HepG2 (cell line): ENCODE measurements at regions of chr6 and their contacts with region 1.

Region 1: GRCh38 chr6:63764318-63764916 is 128.8 kb downstream of the PHF3 start:
- DNase-seq: peak; percentile 65
- ATAC-seq: no peak
- H3K4me3 ChIP-seq: no peak overlapping the region
- H3K27ac ChIP-seq: no peak overlapping the region
- H3K4me1 ChIP-seq: no peaks in the 10 kb centered on the region
- H3K27me3 ChIP-seq: no peaks in the 10 kb centered on the region
- CTCF ChIP-seq: peak; percentile 46; the same call in 1 of the 2 replicates
- EP300 ChIP-seq: no peak
- POLR2A ChIP-seq: no peak
- RAD21 ChIP-seq: no peak

Region 2: DNA sequence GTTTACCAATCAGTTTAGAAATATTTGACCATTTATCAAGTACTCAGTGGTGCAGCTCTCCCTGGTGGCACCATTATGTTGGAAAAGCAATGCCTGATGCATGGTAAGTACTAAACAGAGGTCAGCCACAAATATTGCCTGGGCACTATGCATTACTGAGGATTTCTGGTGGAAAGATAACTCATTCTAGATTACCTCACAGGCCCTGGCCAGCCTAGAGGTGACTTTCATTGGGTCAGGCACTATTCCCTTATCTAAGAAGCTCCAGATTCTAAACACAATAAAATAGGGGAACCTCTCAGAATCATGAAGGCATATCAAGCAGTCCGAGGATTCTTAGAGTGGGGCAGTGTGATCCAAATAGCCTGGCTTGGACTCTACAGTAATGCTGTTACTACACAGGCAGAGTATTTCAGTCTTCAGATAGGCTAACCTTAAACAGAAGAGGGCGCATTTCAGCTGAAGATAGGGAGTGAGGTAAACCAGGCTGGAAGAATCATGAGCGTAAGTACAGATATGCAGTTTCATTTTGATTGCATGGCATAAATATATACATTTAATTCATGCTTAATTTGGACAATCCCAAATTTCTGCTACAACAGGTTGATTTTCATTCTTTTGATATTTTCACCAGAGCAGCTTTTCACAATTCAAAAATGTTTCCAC is 456.7 kb before region 1 on chr6:
- CTCF ChIA-PET with region 1: interaction called, 10 read pairs
- POLR2A ChIA-PET with region 1: no interaction called
- in situ Hi-C with region 1: no loop called
- intact Hi-C with region 1: loop called (anchors 1 kb)
- DNase-seq: peak; percentile 72
- ATAC-seq: peak; percentile 100
- H3K4me3 ChIP-seq: peak overlapping the region in 1 of 3 experiments; percentile 2; a peak in 2 of 6 replicates
- H3K27ac ChIP-seq: no peak overlapping the region
- H3K4me1 ChIP-seq: peaks cover 18% of the 10 kb centered on the region
- H3K27me3 ChIP-seq: no peaks in the 10 kb centered on the region
- CTCF ChIP-seq: peak; percentile 84
- EP300 ChIP-seq: no peak
- POLR2A ChIP-seq: no peak
- RAD21 ChIP-seq: peak; percentile 73

Region 3: DNA sequence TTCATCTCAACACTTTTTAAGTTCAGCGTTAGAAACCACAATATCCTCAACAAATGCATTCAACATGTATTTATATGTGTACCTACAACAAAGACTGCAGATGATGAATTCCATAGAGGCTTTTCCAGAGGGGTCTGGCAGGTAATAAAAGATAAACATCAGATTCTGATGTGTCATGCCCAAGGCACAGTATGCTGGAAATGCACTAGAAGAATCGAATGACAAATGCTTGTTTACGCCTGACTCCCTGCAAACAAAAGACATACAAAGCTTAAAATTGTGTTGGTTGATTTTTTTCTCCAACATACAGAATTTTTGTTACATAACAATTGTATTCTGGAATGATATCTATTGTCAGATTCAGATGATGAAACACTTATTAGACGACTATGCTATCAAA is 444.5 kb before region 1 on chr6 and contains the start of gene LGSN:
- CTCF ChIA-PET with region 1: no interaction called
- POLR2A ChIA-PET with region 1: no interaction called
- in situ Hi-C with region 1: no loop called
- intact Hi-C with region 1: no loop called
- DNase-seq: no peak
- ATAC-seq: no peak
- H3K4me3 ChIP-seq: no peak within 1 kb of the TSS
- H3K27ac ChIP-seq: no peak within 1 kb of the TSS
- H3K4me1 ChIP-seq: no peaks in the 10 kb centered on the region
- H3K27me3 ChIP-seq: no peaks in the 10 kb centered on the region
- CTCF ChIP-seq: no peak
- EP300 ChIP-seq: no peak
- POLR2A ChIP-seq: no peak
- RAD21 ChIP-seq: no peak
- total RNA-seq, gene LGSN: 0.13 and 0.53 TPM in 2 replicates

Region 4: GRCh38 chr6:63584125-63584514 is 180.3 kb before region 1 on chr6:
- CTCF ChIA-PET with region 1: no interaction called
- POLR2A ChIA-PET with region 1: no interaction called
- in situ Hi-C with region 1: no loop called
- intact Hi-C with region 1: loop called (anchors 5 kb)
- DNase-seq: no peak
- ATAC-seq: peak; percentile 33
- H3K4me3 ChIP-seq: no peak overlapping the region
- H3K27ac ChIP-seq: no peak overlapping the region
- H3K4me1 ChIP-seq: peaks cover 9% of the 10 kb centered on the region
- H3K27me3 ChIP-seq: no peaks in the 10 kb centered on the region
- CTCF ChIP-seq: no peak
- EP300 ChIP-seq: no peak
- POLR2A ChIP-seq: peak in 1 of 2 experiments; percentile 65; a peak in 1 of 4 replicates
- RAD21 ChIP-seq: no peak

Region 5: DNA sequence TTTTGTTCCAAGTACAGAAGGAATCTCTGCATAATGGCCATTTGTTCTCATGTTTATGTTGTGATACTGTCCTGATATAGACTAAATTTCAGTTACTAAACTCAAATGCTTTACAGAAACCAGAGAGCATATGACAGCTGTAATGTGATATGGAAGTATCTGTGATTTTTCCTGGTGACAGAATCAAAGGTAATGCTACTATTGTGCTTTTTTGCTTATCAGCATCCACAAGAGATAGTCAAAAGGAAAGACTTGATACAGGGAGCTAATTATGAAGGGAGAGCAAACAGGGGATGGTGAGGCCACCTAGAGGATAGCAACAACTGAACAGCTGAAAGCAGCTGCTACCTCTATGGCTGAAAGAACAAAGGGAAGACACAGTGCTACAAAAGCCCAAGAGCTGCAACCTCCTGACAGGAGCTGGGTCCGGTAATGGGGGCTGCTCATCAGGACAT is 52.6 kb after region 1 on chr6:
- CTCF ChIA-PET with region 1: no interaction called
- POLR2A ChIA-PET with region 1: no interaction called
- in situ Hi-C with region 1: no loop called
- intact Hi-C with region 1: no loop called
- DNase-seq: peak; percentile 25
- ATAC-seq: peak; percentile 98
- H3K4me3 ChIP-seq: no peak overlapping the region
- H3K27ac ChIP-seq: no peak overlapping the region
- H3K4me1 ChIP-seq: no peaks in the 10 kb centered on the region
- H3K27me3 ChIP-seq: no peaks in the 10 kb centered on the region
- CTCF ChIP-seq: peak; percentile 55
- EP300 ChIP-seq: no peak
- POLR2A ChIP-seq: no peak
- RAD21 ChIP-seq: no peak